ENCODE measurements at regions of chr3 and their contacts with region 1.

Region 1: GRCh38 chr3:10738688-10739372 is 77.2 kb upstream of the SLC6A11 start:
- DNase-seq: peak; percentile 63
- H3K4me3 ChIP-seq: peak overlapping the region in 1 of 4 donors; percentile 32
- H3K27ac ChIP-seq: no peak overlapping the region
- H3K4me1 ChIP-seq: peaks cover 0 to 4% (median 2%) of the 10 kb centered on the region in 4 donors
- H3K27me3 ChIP-seq: peaks cover 39% of the 10 kb centered on the region
- CTCF ChIP-seq: peak; percentile 72 to 92 (median 83)
- EP300 ChIP-seq: no peak
- POLR2A ChIP-seq: no peak

Region 2: GRCh38 chr3:10344147-10344943 is 394.5 kb before region 1 on chr3:
- in situ Hi-C with region 1: loop called in 3 of 4 experiments (anchors 10 to 25 kb)
- intact Hi-C with region 1: loop called (anchors 1 kb)
- DNase-seq: peak; percentile 37
- H3K4me3 ChIP-seq: no peak overlapping the region
- H3K27ac ChIP-seq: no peak overlapping the region
- H3K4me1 ChIP-seq: no peaks in the 10 kb centered on the region
- H3K27me3 ChIP-seq: peaks cover 6% of the 10 kb centered on the region
- CTCF ChIP-seq: peak; percentile 64 to 92 (median 89)
- EP300 ChIP-seq: no peak
- POLR2A ChIP-seq: no peak

Measured in transverse colon (tissue), 4 donors.